ENCODE measurements at regions of chr7 and their contacts with region 1.

Region 1: DNA sequence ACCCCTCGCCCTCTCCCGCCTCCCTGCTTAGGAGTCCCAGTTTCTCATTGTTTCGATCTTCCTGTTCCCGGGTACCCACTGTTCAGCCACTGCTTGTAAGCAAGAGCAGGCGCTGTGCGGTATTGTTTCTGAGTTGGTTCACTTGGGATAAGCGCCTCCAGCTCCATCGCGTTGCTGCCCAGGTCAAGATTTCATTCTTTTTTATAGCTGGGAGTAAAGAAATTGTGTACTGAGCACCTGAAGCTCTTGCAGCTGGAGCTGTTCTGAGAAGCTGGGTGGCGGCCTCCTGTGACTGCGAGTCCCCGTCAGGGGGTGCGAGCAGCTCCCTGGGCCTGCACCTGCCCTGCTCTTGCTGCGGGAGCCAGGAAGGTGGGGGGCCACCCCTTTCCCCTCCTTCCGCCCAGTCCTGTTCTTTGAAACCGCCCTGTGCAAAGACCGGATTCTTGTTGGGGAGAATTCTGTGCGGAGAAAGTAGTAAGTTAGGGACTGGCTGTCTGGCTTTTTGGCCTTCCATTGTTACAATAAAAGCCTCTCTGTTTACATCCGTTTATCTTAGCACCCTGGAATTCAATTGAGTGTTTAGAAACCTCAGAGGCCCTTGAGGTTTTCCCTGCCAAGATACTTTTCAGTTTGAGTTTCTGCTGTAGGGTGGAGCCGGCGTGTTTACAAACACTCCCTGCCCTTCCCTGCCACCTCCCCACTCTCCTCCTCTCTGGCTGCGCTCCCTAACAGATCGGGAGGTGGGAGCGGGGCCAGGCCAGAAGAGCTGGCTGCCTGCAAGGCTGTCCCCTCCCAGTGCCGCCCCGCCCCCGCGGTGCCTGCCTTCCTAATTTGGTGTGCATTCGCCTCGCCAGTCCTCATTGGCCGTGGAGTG is 30.8 kb upstream of the AP5Z1 start:
- DNase-seq: peak; percentile 58
- ATAC-seq: peak; percentile 95
- H3K4me3 ChIP-seq: peak overlapping the region; percentile 69; the same call in 1 of the 2 replicates
- H3K27ac ChIP-seq: peak overlapping the region; percentile 90
- H3K4me1 ChIP-seq: peaks cover 29% of the 10 kb centered on the region
- H3K27me3 ChIP-seq: no peaks in the 10 kb centered on the region
- CTCF ChIP-seq: no peak
- EP300 ChIP-seq: no peak
- POLR2A ChIP-seq: peak; percentile 71
- RAD21 ChIP-seq: no peak

Region 2: GRCh38 chr7:4725014-4725849 is 19.4 kb before region 1 on chr7:
- CTCF ChIA-PET with region 1: interaction called, 4 read pairs
- POLR2A ChIA-PET with region 1: interaction called, 7 read pairs
- RAD21 ChIA-PET with region 1: interaction called, 16 read pairs
- SMC1A ChIA-PET with region 1: interaction called, 4 read pairs
- in situ Hi-C with region 1: no loop called
- intact Hi-C with region 1: no loop called
- DNase-seq: no peak
- ATAC-seq: peak; percentile 91
- H3K4me3 ChIP-seq: peak overlapping the region; percentile 78
- H3K27ac ChIP-seq: peak overlapping the region; percentile 74
- H3K4me1 ChIP-seq: peaks cover 30% of the 10 kb centered on the region
- H3K27me3 ChIP-seq: no peaks in the 10 kb centered on the region
- CTCF ChIP-seq: no peak
- EP300 ChIP-seq: no peak
- POLR2A ChIP-seq: peak; percentile 72
- RAD21 ChIP-seq: 0 out of 2 replicates have a peak, but pooled peaks have one; percentile 0

Region 3: GRCh38 chr7:4775250-4775847 is 30.7 kb after region 1 on chr7 and contains the start of gene AP5Z1:
- CTCF ChIA-PET with region 1: interaction called, 3 read pairs
- POLR2A ChIA-PET with region 1: interaction called, 4 read pairs
- RAD21 ChIA-PET with region 1: interaction called, 5 read pairs
- SMC1A ChIA-PET with region 1: interaction called, 6 read pairs
- in situ Hi-C with region 1: no loop called
- intact Hi-C with region 1: loop called (anchors 1 kb)
- DNase-seq: peak; percentile 82
- ATAC-seq: peak; percentile 96
- H3K4me3 ChIP-seq: peak within 1 kb of the TSS; percentile 96
- H3K27ac ChIP-seq: peak within 1 kb of the TSS; percentile 96
- H3K4me1 ChIP-seq: peaks cover 10% of the 10 kb centered on the region
- H3K27me3 ChIP-seq: no peaks in the 10 kb centered on the region
- CTCF ChIP-seq: no peak
- EP300 ChIP-seq: 0 out of 4 replicates have a peak, but pooled peaks of 1 of the 2 experiments have one; percentile 8
- POLR2A ChIP-seq: peak; percentile 99
- RAD21 ChIP-seq: no peak
- polyA plus RNA-seq, gene AP5Z1: 0.37 to 2.2 TPM

Region 4: GRCh38 chr7:4815609-4816418 is 71.2 kb after region 1 on chr7:
- CTCF ChIA-PET with region 1: no interaction called
- POLR2A ChIA-PET with region 1: no interaction called
- RAD21 ChIA-PET with region 1: no interaction called
- SMC1A ChIA-PET with region 1: no interaction called
- in situ Hi-C with region 1: no loop called
- intact Hi-C with region 1: no loop called
- DNase-seq: no peak
- ATAC-seq: no peak
- H3K4me3 ChIP-seq: no peak overlapping the region
- H3K27ac ChIP-seq: no peak overlapping the region
- H3K4me1 ChIP-seq: no peaks in the 10 kb centered on the region
- H3K27me3 ChIP-seq: no peaks in the 10 kb centered on the region
- CTCF ChIP-seq: 0 out of 6 replicates have a peak, but pooled peaks of 1 of the 3 experiments have one; percentile 8
- EP300 ChIP-seq: no peak
- POLR2A ChIP-seq: no peak
- RAD21 ChIP-seq: no peak

Measured in GM12878 (cell line).